Heart right ventricle (tissue), 16 donors: ENCODE measurements at regions of chr2 and their contacts with region 1.

Region 1: GRCh38 chr2:219430633-219431615 is 3.7 kb upstream of the SPEG start:
- DNase-seq: peak; percentile 52 to 67
- ATAC-seq: peak; percentile 60 to 78 (median 70)
- H3K4me3 ChIP-seq: no peak overlapping the region
- H3K27ac ChIP-seq: peak overlapping the region in 9 of 10 donors; percentile 24 to 84 (median 75)
- H3K4me1 ChIP-seq: peaks cover 0 to 33% (median 6%) of the 10 kb centered on the region in 9 donors
- H3K27me3 ChIP-seq: peaks cover 0 to 33% (median 21%) of the 10 kb centered on the region in 7 donors
- CTCF ChIP-seq: peak in 6 of 9 donors; percentile 19 to 51 (median 41)

Region 2: GRCh38 chr2:219452838-219453317 is 22.0 kb after region 1 on chr2:
- intact Hi-C with region 1: loop called in 1 of 10 experiments (anchors 2 kb)
- DNase-seq: peak; percentile 52 to 64
- ATAC-seq: peak; percentile 64 to 88 (median 73)
- H3K4me3 ChIP-seq: no peak overlapping the region
- H3K27ac ChIP-seq: peak overlapping the region; percentile 70 to 97 (median 85)
- H3K4me1 ChIP-seq: peaks cover 14 to 52% (median 33%) of the 10 kb centered on the region in 9 donors
- H3K27me3 ChIP-seq: peaks cover 0 to 28% (median 15%) of the 10 kb centered on the region in 7 donors
- CTCF ChIP-seq: no peak

Region 3: DNA sequence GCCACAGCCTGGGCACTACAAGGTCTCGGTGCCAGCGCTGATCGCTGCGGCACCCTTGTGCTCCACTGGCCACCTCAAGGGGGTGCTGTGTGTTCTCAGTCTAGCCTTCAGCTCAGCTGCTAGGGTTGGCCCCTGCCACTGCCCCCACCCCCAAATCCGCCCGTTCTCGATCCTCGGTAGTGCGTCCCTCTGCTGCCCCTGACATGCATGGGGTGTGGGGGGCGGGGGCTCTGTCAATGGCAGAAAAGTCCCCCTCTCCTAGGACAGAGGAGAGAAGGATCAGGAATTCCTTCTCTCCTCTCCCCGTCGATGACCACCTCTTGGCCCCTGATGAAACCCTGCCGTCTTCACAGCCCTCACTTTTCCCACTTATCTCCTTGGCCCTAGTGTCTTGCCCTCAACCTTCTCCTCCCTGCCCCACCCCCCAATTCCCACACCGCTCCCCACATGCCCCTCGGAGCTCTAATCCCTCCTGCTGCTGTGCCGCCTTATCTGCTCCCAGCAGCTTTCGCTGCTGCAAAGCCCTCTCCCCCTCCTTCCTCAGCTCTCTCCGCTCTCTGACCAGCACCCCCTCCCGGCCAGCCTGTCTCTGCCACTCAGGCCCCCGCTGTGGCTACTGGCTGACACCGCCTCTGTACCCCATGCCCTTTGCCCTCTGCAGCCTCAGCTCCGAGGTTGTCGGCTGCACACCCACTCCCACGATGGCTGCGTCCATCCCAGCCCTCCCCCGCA is 79.0 kb after region 1 on chr2:
- intact Hi-C with region 1: no loop called
- DNase-seq: peak; percentile 45 to 49
- ATAC-seq: peak; percentile 57 to 87 (median 74)
- H3K4me3 ChIP-seq: peak overlapping the region in 7 of 10 donors; percentile 14 to 42 (median 32)
- H3K27ac ChIP-seq: no peak overlapping the region
- H3K4me1 ChIP-seq: peaks cover 5 to 58% (median 30%) of the 10 kb centered on the region in 9 donors
- H3K27me3 ChIP-seq: peaks cover 0 to 63% (median 48%) of the 10 kb centered on the region in 7 donors
- CTCF ChIP-seq: peak; percentile 28 to 73 (median 64)